Kidney (tissue), 22 donors: ENCODE measurements at regions of chr6 and their contacts with region 1.

Region 1: GRCh38 chr6:161370880-161371279 is 97.0 kb upstream of the AGPAT4 start:
- DNase-seq: peak in 4 of 5 donors; percentile 69 to 80 (median 77)
- H3K4me3 ChIP-seq: no peak overlapping the region
- H3K27ac ChIP-seq: no peak overlapping the region
- H3K4me1 ChIP-seq: peaks cover 0 to 2% (median 0%) of the 10 kb centered on the region in 3 donors
- H3K27me3 ChIP-seq: no peaks in the 10 kb centered on the region
- CTCF ChIP-seq: peak; percentile 86

Region 2: GRCh38 chr6:160733050-160733646 is 637.7 kb before region 1 on chr6:
- intact Hi-C with region 1: loop called (anchors 10 kb)
- DNase-seq: peak in 4 of 5 donors; percentile 46 to 75 (median 60)
- H3K4me3 ChIP-seq: no peak overlapping the region
- H3K27ac ChIP-seq: no peak overlapping the region
- H3K4me1 ChIP-seq: no peaks in the 10 kb centered on the region
- H3K27me3 ChIP-seq: no peaks in the 10 kb centered on the region
- CTCF ChIP-seq: peak; percentile 72

Region 3: DNA sequence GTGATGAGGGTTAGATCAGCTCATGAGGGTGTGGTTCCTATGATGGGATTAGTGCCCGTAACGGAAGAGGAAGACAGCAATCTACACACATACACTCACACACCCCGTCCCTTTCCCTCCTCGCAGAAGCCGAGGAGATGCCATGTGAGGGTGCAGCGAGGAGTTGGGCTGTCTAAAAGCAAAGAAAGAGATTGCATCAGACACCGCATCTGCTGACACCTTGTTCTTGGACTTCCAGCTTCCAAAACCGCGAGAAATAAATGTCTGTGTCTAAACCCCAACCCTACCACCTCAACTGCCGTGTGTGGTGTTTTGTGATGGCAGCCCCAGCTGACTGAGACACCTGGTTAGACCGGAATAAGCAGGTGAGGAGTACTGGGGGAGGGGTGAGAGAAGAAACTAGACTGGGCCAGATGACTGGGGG is 444.0 kb before region 1 on chr6:
- intact Hi-C with region 1: loop called (anchors 5 kb)
- DNase-seq: no peak
- H3K4me3 ChIP-seq: no peak overlapping the region
- H3K27ac ChIP-seq: no peak overlapping the region
- H3K4me1 ChIP-seq: no peaks in the 10 kb centered on the region
- H3K27me3 ChIP-seq: no peaks in the 10 kb centered on the region
- CTCF ChIP-seq: no peak

Region 4: GRCh38 chr6:161257793-161258457 is 113.0 kb before region 1 on chr6:
- intact Hi-C with region 1: no loop called
- DNase-seq: peak in 1 of 5 donors; percentile 21
- H3K4me3 ChIP-seq: no peak overlapping the region
- H3K27ac ChIP-seq: no peak overlapping the region
- H3K4me1 ChIP-seq: no peaks in the 10 kb centered on the region
- H3K27me3 ChIP-seq: no peaks in the 10 kb centered on the region
- CTCF ChIP-seq: no peak

Region 5: DNA sequence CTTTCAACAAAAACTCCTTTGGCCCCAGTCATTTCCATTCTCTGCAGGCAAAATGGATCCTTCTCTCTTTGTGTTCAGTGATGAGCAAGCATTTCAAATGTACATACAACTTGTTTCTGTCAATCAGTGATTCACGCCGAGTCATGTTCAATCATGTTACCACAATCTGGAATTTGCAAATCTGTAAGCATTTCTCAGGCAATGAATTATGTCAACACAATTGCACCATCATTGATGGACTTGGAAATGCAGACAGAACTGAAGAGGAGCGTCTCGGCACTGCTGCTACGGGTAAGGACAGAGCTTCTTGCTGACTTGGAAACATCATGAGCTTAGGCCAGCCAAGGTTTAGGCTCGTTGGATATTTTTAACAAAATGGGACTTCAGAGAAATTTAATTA is 35.8 kb after region 1 on chr6:
- intact Hi-C with region 1: no loop called
- DNase-seq: no peak
- H3K4me3 ChIP-seq: no peak overlapping the region
- H3K27ac ChIP-seq: no peak overlapping the region
- H3K4me1 ChIP-seq: no peaks in the 10 kb centered on the region
- H3K27me3 ChIP-seq: no peaks in the 10 kb centered on the region
- CTCF ChIP-seq: no peak

Region 6: GRCh38 chr6:162525181-162525580 is 1154.3 kb after region 1 on chr6:
- intact Hi-C with region 1: no loop called
- DNase-seq: no peak
- H3K4me3 ChIP-seq: no peak overlapping the region
- H3K27ac ChIP-seq: no peak overlapping the region
- H3K4me1 ChIP-seq: peaks cover 0 to 4% (median 3%) of the 10 kb centered on the region in 3 donors
- H3K27me3 ChIP-seq: no peaks in the 10 kb centered on the region
- CTCF ChIP-seq: no peak